ENCODE measurements at regions of chr6 and their contacts with region 1.

Region 1: GRCh38 chr6:165884813-165885765 is 222.0 kb upstream of the PDE10A start:
- DNase-seq: peak; percentile 60 to 84 (median 74)
- ATAC-seq: peak; percentile 96
- H3K4me3 ChIP-seq: no peak overlapping the region
- H3K27ac ChIP-seq: no peak overlapping the region
- H3K4me1 ChIP-seq: no peaks in the 10 kb centered on the region
- H3K27me3 ChIP-seq: peaks cover 0 to 8% of the 10 kb centered on the region in 2 donors
- CTCF ChIP-seq: peak; percentile 79 to 85

Region 2: GRCh38 chr6:166097915-166098522 is 212.9 kb after region 1 on chr6:
- intact Hi-C with region 1: loop called in 1 of 2 experiments (anchors 5 kb)
- DNase-seq: peak; percentile 28 to 88 (median 62)
- ATAC-seq: peak; percentile 100
- H3K4me3 ChIP-seq: no peak overlapping the region
- H3K27ac ChIP-seq: no peak overlapping the region
- H3K4me1 ChIP-seq: no peaks in the 10 kb centered on the region
- H3K27me3 ChIP-seq: peaks cover 0 to 22% of the 10 kb centered on the region in 2 donors
- CTCF ChIP-seq: peak; percentile 67 to 81